A549 (cell line): ENCODE measurements at regions of chr1 and their contacts with region 1.

Region 1: GRCh38 chr1:114849975-114850374 is 4.7 kb upstream of the SYCP1 start:
- DNase-seq: no peak
- ATAC-seq: no peak
- H3K4me3 ChIP-seq: no peak overlapping the region
- H3K27ac ChIP-seq: no peak overlapping the region
- H3K4me1 ChIP-seq: no peaks in the 10 kb centered on the region
- CTCF ChIP-seq: no peak
- EP300 ChIP-seq: no peak
- POLR2A ChIP-seq: no peak
- RAD21 ChIP-seq: no peak

Region 2: GRCh38 chr1:114803001-114803400 is 47.0 kb before region 1 on chr1:
- CTCF ChIA-PET with region 1: no interaction called
- POLR2A ChIA-PET with region 1: no interaction called
- DNase-seq: peak in 1 of 2 experiments; percentile 2
- ATAC-seq: no peak
- H3K4me3 ChIP-seq: no peak overlapping the region
- H3K27ac ChIP-seq: no peak overlapping the region
- H3K4me1 ChIP-seq: no peaks in the 10 kb centered on the region
- CTCF ChIP-seq: no peak
- EP300 ChIP-seq: no peak
- POLR2A ChIP-seq: no peak
- RAD21 ChIP-seq: no peak

Region 3: DNA sequence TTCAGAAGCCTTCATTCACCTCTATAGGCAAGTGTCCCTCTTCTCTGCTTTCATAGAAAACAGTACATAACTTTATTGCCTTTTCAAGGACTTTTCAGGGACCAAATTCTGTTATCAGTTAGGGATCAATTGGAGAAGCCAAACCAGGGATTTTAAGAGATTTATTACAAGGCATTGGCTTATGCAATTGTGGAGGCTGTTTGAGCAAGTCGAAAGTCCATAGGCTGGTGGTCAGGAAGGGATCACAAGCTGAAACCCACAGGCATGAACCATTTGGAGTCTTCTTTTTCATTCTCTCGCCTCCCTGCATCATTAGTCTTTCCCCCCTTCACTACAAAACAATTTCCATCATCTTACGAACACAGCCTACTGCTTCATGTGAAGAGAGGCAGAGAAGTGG is 30.1 kb before region 1 on chr1:
- CTCF ChIA-PET with region 1: no interaction called
- POLR2A ChIA-PET with region 1: interaction called, 11 read pairs
- DNase-seq: no peak
- ATAC-seq: no peak
- H3K4me3 ChIP-seq: no peak overlapping the region
- H3K27ac ChIP-seq: no peak overlapping the region
- H3K4me1 ChIP-seq: no peaks in the 10 kb centered on the region
- CTCF ChIP-seq: no peak
- EP300 ChIP-seq: no peak
- POLR2A ChIP-seq: no peak
- RAD21 ChIP-seq: no peak

Region 4: GRCh38 chr1:114997510-114998289 is 147.7 kb after region 1 on chr1:
- CTCF ChIA-PET with region 1: no interaction called
- POLR2A ChIA-PET with region 1: no interaction called
- DNase-seq: no peak
- ATAC-seq: no peak
- H3K4me3 ChIP-seq: no peak overlapping the region
- H3K27ac ChIP-seq: no peak overlapping the region
- H3K4me1 ChIP-seq: no peaks in the 10 kb centered on the region
- CTCF ChIP-seq: no peak
- EP300 ChIP-seq: no peak
- POLR2A ChIP-seq: no peak
- RAD21 ChIP-seq: no peak